Activated CD4-positive, alpha-beta T cell treated with anti-CD3 and anti-CD28 coated beads for 36 hours (primary cell): ENCODE measurements at regions of chrX and their contacts with region 1.

Region 1: GRCh38 chrX:106999002-106999975 is 723 bp downstream of the MORC4 start:
- DNase-seq: peak; percentile 66
- ATAC-seq: peak; percentile 65
- H3K4me3 Mint-ChIP-seq: peak overlapping the region; percentile 80
- H3K27ac Mint-ChIP-seq: peak overlapping the region; percentile 78
- H3K4me1 Mint-ChIP-seq: peaks cover 3% of the 10 kb centered on the region
- H3K27me3 Mint-ChIP-seq: no peaks in the 10 kb centered on the region

Region 2: DNA sequence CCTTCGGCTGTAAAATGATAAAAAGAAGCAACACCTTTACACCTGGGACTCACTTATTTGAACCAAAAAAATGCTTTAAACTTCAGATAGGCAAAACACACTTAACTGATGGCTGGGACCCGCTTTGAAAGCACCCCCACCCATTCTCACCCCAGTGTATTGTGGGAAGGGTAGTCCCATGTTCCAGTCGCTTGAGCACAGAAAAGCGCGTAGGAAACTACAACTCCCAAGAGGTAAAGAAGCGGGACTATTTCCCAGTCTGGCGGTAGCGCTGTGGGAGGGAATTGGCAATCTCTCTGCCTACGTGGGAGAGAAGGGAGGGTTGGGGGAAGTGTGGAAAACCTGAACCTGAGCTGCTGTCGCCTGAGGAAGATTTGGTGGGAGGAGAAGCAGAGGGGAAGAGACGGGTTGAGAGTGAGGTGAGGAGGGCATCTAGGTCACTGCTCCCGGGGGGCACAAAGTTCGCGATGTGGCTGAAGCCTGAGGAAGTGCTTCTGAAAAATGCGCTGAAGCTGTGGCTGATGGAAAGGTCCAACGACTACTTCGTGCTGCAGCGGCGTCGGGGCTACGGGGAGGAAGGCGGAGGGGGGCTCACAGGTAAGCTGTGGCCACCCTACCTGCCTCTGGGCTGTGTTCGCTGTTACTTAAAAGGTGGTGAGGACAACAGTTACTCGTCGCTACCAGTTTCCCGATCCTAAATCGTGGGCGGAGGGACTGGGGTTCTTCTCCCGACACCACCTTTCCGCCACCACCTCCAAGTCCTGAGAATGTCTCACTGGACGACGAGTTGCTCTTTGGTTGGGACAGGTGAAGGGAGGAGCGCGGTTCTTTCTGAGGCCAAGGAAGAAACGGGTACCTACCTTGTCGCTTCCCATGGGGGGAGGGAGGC is 196.7 kb before region 1 on chrX and contains the start of gene TBC1D8B:
- CTCF ChIA-PET with region 1: no interaction called
- POLR2A ChIA-PET with region 1: no interaction called
- intact Hi-C with region 1: no loop called
- DNase-seq: peak; percentile 27
- ATAC-seq: peak; percentile 93
- H3K4me3 Mint-ChIP-seq: peak within 1 kb of the TSS; percentile 82
- H3K27ac Mint-ChIP-seq: peak within 1 kb of the TSS; percentile 78
- H3K4me1 Mint-ChIP-seq: peaks cover 7% of the 10 kb centered on the region
- H3K27me3 Mint-ChIP-seq: peaks cover 37% of the 10 kb centered on the region
- total RNA-seq, gene TBC1D8B: 0.82 to 0.88 TPM

Region 3: DNA sequence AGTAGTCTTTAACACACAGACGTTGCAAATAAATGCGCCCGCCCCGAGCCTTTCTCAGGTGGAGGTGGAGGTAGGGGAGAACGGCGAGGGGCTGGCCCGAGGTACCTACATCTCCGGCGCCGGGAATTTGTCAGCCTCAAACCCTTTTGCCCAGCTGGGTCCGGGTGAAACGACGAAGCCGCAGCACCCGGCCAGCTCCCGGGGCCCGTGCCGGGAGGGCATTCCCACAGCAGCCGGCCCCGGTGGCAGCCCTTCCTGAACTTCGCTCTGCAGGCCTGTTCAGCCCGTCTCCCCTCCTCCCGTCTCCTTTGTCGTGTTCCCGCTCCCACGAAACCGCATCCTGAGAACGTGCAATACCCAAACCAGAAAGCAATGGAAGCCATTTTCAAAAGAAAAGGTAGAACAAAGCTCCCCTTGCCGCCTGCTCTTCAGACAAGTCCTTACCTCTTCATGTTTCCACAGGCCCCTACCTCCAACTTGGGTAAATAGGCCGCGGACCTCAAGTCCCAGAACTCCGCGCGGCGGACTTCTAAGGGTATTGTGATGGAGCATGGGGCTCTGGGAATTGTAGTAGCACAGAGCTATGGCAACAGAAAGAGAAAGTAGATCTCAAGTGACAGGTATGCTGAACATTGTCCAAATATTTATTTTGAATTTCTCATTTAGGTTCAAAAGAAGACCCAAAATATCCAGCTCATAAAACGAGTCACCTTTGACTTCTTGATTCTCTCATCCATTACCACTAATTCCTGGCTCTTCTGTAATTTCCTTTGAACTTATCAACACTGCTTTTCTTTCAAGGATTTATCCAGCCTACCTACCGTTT is 119.2 kb after region 1 on chrX and contains the start of gene RBM41:
- CTCF ChIA-PET with region 1: interaction called, 7 read pairs
- POLR2A ChIA-PET with region 1: no interaction called
- intact Hi-C with region 1: loop called in 1 of 2 experiments (anchors 5 kb)
- DNase-seq: peak; percentile 81
- ATAC-seq: peak; percentile 99
- H3K4me3 Mint-ChIP-seq: peak within 1 kb of the TSS; percentile 99
- H3K27ac Mint-ChIP-seq: peak within 1 kb of the TSS; percentile 98
- H3K4me1 Mint-ChIP-seq: peaks cover 27% of the 10 kb centered on the region
- H3K27me3 Mint-ChIP-seq: no peaks in the 10 kb centered on the region
- total RNA-seq, gene RBM41: 12.0 to 12.2 TPM

Region 4: GRCh38 chrX:107171369-107172102 is 172.2 kb after region 1 on chrX:
- CTCF ChIA-PET with region 1: no interaction called
- POLR2A ChIA-PET with region 1: no interaction called
- intact Hi-C with region 1: no loop called
- DNase-seq: no peak
- ATAC-seq: peak; percentile 60
- H3K4me3 Mint-ChIP-seq: no peak overlapping the region
- H3K27ac Mint-ChIP-seq: no peak overlapping the region
- H3K4me1 Mint-ChIP-seq: peaks cover 2% of the 10 kb centered on the region
- H3K27me3 Mint-ChIP-seq: no peaks in the 10 kb centered on the region

Region 5: DNA sequence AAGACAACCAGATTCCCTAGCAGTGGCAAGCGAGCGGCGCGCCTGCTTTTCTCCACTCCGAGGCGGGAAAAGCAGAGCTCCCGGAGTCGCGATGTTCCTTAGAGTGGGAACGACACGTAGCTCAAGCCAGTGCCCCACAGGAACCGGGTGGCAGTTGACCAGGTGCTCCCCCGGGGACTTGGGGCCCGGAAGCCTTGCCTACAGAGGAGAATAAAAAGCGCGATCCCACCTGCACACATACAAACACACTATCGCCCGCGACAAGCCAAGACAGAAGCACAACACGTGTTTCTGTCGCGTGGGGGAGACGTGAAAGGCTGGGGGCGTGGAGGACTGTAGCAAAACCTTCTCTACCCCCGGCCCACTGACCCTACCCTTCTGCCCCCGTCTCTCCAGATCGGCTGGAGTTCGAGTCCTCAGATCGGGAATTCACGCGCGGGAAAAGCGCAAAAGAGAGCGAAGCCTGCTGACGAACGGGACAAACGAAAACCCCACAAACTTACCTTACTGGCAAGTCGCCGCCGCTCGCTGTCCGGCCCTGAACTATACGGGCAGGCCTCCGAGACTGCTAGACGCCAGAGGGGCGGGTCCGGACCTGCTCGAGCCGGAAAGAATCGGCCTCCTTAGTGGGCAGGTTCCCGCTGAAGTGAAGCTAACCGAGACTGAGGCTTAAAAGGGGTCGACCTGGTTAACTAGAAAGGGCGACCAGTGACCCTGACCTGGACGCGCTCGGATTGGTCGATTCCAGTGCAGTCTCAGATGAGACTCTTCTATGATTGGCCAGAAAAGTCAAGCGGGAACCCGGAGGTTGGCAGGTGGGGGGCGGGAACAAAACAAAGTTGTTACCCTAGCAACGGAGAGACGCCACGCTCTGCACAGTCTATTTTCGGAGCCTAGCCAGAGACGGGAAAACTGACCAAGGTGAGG is 206.7 kb after region 1 on chrX and contains the starts of genes DNAAF6 and NUP62CL:
- CTCF ChIA-PET with region 1: no interaction called
- POLR2A ChIA-PET with region 1: no interaction called
- intact Hi-C with region 1: loop called in 1 of 2 experiments (anchors 2 kb)
- DNase-seq: peak; percentile 81
- ATAC-seq: peak; percentile 99
- H3K4me3 Mint-ChIP-seq: peak within 1 kb of the TSS; percentile 87
- H3K27ac Mint-ChIP-seq: peak within 1 kb of the TSS; percentile 73
- H3K4me1 Mint-ChIP-seq: peaks cover 2% of the 10 kb centered on the region
- H3K27me3 Mint-ChIP-seq: no peaks in the 10 kb centered on the region
- total RNA-seq, gene DNAAF6: not detected
- total RNA-seq, gene NUP62CL: 1.7 to 2.5 TPM

Region 6: DNA sequence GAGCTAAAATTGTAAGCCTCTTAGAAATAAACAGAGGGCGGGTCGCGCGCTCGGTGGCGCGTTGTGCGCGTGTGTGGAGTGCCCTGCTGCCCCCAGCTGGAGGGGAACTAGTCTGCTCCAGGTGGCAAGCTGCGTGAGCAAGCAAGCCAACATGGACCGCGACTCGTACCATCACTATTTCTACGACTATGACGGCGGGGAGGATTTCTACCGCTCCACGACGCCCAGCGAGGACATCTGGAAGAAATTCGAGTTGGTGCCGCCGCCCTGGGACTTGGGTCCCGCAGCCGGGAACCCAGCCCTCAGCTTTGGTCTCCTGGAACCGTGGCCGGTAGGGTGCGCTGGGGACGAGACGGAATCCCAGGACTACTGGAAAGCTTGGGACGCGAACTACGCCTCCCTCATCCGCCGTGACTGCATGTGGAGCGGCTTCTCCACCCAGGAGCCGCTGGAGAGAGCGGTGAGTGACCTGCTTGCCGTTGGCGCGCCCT is 273.2 kb after region 1 on chrX:
- CTCF ChIA-PET with region 1: interaction called, 4 read pairs
- POLR2A ChIA-PET with region 1: no interaction called
- intact Hi-C with region 1: loop called in 1 of 2 experiments (anchors 5 kb)
- DNase-seq: peak; percentile 50
- ATAC-seq: peak; percentile 70
- H3K4me3 Mint-ChIP-seq: peak overlapping the region; percentile 12
- H3K27ac Mint-ChIP-seq: no peak overlapping the region
- H3K4me1 Mint-ChIP-seq: peaks cover 3% of the 10 kb centered on the region
- H3K27me3 Mint-ChIP-seq: peaks cover 12% of the 10 kb centered on the region

Region 7: DNA sequence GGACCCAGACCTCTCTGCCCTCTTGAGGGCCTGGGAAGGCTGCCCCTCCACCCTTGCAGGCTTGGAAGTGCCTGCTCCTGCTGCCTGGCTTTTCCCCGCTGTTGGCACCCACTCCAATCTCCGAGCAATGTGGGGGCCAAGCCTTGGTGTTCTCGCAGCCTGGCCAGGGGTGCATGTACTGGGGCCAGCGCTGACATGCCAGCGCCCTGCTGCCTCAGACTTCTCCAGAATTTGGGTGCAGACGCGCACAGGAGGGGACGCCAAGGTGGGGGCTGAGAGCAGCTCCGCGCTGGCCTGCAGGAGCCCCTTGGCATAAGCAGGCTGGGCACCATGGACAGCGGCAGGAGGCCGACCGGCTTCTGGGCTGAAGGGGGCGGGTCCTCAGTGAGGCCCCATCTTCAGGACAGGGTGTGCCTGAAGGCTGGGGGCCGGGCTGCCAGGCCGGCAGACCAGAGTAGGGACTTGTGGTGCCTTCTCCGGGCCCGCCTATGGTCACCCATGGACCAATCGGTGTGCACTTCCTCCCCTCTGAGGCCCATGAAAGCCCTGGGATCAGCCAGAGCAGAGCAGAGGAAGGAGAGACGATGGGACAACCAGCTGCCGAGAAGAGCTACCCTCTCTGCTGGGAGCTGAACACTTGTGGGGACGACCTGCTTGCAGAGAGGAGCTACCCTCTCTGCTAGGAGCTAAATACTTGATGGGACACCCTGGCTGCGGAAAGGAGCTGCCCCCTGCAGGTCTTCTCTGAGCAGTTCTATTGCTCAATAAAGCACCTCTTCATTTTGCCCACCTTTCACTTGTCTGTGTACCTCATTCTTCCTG is 325.4 kb after region 1 on chrX:
- CTCF ChIA-PET with region 1: no interaction called
- POLR2A ChIA-PET with region 1: no interaction called
- intact Hi-C with region 1: loop called in 1 of 2 experiments (anchors 1 kb)
- DNase-seq: peak; percentile 34
- ATAC-seq: peak; percentile 30
- H3K4me3 Mint-ChIP-seq: no peak overlapping the region
- H3K27ac Mint-ChIP-seq: no peak overlapping the region
- H3K4me1 Mint-ChIP-seq: no peaks in the 10 kb centered on the region
- H3K27me3 Mint-ChIP-seq: peaks cover 2% of the 10 kb centered on the region

Region 8: DNA sequence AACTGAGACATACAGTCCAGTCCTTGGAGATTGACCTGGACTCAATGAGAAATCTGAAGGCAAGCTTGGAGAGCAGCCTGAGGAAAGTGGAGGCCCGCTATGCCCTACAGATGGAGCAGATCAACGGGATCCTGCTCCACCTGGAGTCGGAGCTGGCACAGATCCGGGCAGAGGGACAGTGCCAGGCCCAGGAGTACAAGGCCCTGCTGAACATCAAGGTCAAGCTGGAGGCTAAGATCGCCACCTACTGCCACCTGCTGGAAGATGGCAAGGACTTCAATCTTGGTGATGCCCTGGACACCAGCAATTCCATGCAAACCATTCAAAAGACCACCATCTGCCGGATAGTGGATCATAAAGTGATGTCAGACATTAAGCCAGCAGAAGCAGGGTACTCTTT is 429.8 kb after region 1 on chrX:
- CTCF ChIA-PET with region 1: interaction called, 4 read pairs
- POLR2A ChIA-PET with region 1: no interaction called
- intact Hi-C with region 1: loop called in 1 of 2 experiments (anchors 1 kb)
- DNase-seq: peak; percentile 51
- ATAC-seq: no peak
- H3K4me3 Mint-ChIP-seq: no peak overlapping the region
- H3K27ac Mint-ChIP-seq: no peak overlapping the region
- H3K4me1 Mint-ChIP-seq: no peaks in the 10 kb centered on the region
- H3K27me3 Mint-ChIP-seq: no peaks in the 10 kb centered on the region

Region 9: DNA sequence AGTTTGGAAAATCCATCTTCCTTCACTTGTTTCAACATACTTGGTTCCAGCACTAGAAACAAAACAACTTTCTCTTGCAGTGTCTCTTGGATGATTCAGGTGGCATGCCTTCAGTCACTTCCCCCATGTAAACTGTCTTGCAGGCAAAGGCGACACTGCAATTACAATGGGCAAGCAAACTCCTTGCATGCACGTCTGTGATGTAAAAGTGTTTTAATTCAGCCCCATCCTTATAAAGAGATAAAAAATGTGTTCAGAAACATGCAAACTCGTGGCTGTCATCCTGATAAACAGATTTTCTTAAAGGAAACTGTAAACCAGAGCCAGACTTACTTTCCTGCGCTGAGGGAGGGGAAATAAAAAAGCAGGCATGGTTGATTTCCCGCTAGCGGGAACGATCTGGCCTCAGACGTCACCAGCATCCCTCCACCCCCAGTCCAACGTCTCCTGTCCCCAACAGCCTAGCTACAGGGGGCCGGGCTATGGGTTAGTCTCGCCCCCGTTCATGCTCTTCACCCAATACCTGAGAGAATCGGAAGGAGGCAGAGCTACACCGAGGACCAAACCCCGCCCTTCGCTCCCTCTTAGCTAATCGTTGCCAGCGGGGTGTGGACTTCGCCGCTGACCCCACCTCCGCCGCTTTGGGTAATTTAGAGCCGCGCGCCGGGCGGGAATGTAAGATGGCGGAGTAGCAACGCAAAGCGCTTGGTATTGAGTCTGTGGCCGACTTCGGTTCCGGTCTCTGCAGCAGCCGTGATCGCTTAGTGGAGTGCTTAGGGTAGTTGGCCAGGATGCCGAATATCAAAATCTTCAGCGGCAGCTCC is 628.8 kb after region 1 on chrX and contains the start of gene PRPS1:
- CTCF ChIA-PET with region 1: no interaction called
- POLR2A ChIA-PET with region 1: no interaction called
- intact Hi-C with region 1: loop called in 1 of 2 experiments (anchors 5 kb)
- DNase-seq: peak; percentile 93
- ATAC-seq: peak; percentile 99
- H3K4me3 Mint-ChIP-seq: peak within 1 kb of the TSS; percentile 89
- H3K27ac Mint-ChIP-seq: peak within 1 kb of the TSS; percentile 93
- H3K4me1 Mint-ChIP-seq: peaks cover 27% of the 10 kb centered on the region
- H3K27me3 Mint-ChIP-seq: no peaks in the 10 kb centered on the region
- total RNA-seq, gene PRPS1: 112 to 141 TPM